ENCODE measurements at regions of chr4 and their contacts with region 1.

Region 1: GRCh38 chr4:78864405-78865024 is 74.7 kb downstream of the PAQR3 start:
- DNase-seq: peak in 3 of 9 experiments; percentile 29 to 78 (median 68)
- ATAC-seq: peak; percentile 73
- H3K4me3 ChIP-seq: no peak overlapping the region
- H3K4me3 Mint-ChIP-seq: no peak overlapping the region
- H3K27ac ChIP-seq: no peak overlapping the region
- H3K27ac Mint-ChIP-seq: no peak overlapping the region
- H3K4me1 ChIP-seq: no peaks in the 10 kb centered on the region
- H3K4me1 Mint-ChIP-seq: peaks cover 2% of the 10 kb centered on the region
- H3K27me3 ChIP-seq: no peaks in the 10 kb centered on the region
- H3K27me3 Mint-ChIP-seq: no peaks in the 10 kb centered on the region
- CTCF ChIP-seq: peak; percentile 94

Region 2: DNA sequence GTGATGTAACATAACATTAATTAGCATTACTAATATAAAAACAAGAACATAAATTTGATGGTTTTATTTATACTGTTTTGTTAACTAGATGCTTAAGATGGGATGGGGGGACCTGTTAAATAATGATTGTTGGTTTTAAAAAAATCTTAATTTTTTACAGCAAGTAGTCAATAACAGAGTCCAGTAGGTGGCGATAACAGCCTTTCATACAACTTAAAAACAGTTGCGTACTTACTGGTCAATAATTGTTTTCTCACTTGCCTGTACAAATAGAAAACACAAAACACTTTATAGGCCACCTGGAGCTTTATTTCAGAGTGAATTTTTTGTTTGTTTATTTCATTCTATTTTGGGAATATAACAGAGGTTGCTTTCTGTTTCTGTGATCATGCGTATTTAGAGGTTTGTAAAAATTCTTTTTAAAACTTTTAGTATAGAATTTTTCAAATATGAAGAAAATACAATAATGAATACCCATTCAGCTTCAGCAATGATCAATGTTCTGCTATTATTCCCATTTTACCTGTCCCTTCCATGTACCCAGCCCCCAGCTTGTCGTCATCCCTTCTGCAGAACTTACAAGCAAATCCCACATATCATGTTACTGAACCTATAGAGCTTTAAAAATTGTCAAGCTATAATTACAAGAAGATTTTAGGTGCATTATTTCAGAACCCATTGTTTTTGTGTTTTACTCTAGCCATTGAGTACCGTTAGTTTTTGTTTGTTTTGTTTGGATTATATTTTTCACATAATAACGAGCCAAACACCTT is 904.8 kb before region 1 on chr4:
- CTCF ChIA-PET with region 1: interaction called, 8 read pairs
- POLR2A ChIA-PET with region 1: no interaction called
- intact Hi-C with region 1: loop called in 1 of 2 experiments (anchors 1 kb)
- DNase-seq: peak in 2 of 9 experiments; percentile 42 to 59
- ATAC-seq: no peak
- H3K4me3 ChIP-seq: no peak overlapping the region
- H3K4me3 Mint-ChIP-seq: no peak overlapping the region
- H3K27ac ChIP-seq: no peak overlapping the region
- H3K27ac Mint-ChIP-seq: no peak overlapping the region
- H3K4me1 ChIP-seq: no peaks in the 10 kb centered on the region
- H3K4me1 Mint-ChIP-seq: peaks cover 5% of the 10 kb centered on the region
- H3K27me3 ChIP-seq: no peaks in the 10 kb centered on the region
- H3K27me3 Mint-ChIP-seq: no peaks in the 10 kb centered on the region
- CTCF ChIP-seq: peak; percentile 87

Region 3: DNA sequence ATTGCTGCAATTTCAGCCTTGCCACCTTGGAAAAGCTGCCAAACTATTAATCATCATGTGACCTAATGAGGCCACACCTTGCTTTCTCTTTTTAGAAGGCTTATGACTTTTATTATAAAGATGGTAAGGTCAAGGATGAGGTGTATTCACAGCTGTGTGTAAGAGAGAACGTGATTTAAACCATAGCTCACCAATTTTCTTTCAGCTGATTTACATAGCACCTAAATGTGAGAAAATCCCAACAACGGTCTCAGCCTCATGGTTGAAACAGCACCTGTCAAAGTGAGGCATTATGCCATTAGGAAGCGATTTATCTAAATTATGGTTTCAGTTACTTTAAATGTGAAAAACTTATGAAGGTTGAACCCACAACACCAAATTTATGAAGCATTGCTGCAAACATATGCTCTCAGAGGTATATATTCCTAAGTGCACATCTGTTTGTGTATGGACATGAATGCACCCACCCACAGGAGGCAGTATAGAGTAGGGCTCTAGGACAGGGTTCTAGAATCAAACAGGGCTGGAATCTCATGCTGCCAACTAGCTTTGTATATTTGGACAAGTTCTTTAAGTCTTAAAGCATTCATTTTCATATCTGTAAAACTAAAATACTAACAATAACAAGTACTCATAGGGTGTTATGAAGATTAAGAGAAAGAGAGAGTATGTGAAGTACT is 272.3 kb before region 1 on chr4:
- CTCF ChIA-PET with region 1: interaction called, 4 read pairs
- POLR2A ChIA-PET with region 1: no interaction called
- intact Hi-C with region 1: loop called in 1 of 2 experiments (anchors 5 kb)
- DNase-seq: peak in 2 of 9 experiments; percentile 9 to 17
- ATAC-seq: no peak
- H3K4me3 ChIP-seq: no peak overlapping the region
- H3K4me3 Mint-ChIP-seq: no peak overlapping the region
- H3K27ac ChIP-seq: no peak overlapping the region
- H3K27ac Mint-ChIP-seq: no peak overlapping the region
- H3K4me1 ChIP-seq: no peaks in the 10 kb centered on the region
- H3K4me1 Mint-ChIP-seq: no peaks in the 10 kb centered on the region
- H3K27me3 ChIP-seq: no peaks in the 10 kb centered on the region
- H3K27me3 Mint-ChIP-seq: no peaks in the 10 kb centered on the region
- CTCF ChIP-seq: no peak

Region 4: GRCh38 chr4:78644744-78645330 is 219.7 kb before region 1 on chr4:
- CTCF ChIA-PET with region 1: interaction called, 8 read pairs
- POLR2A ChIA-PET with region 1: no interaction called
- intact Hi-C with region 1: loop called (anchors 1 to 2 kb)
- DNase-seq: peak in 8 of 9 experiments; percentile 1 to 66 (median 40)
- ATAC-seq: peak; percentile 98
- H3K4me3 ChIP-seq: no peak overlapping the region
- H3K4me3 Mint-ChIP-seq: no peak overlapping the region
- H3K27ac ChIP-seq: no peak overlapping the region
- H3K27ac Mint-ChIP-seq: no peak overlapping the region
- H3K4me1 ChIP-seq: no peaks in the 10 kb centered on the region
- H3K4me1 Mint-ChIP-seq: peaks cover 7% of the 10 kb centered on the region
- H3K27me3 ChIP-seq: no peaks in the 10 kb centered on the region
- H3K27me3 Mint-ChIP-seq: no peaks in the 10 kb centered on the region
- CTCF ChIP-seq: peak; percentile 85

Region 5: DNA sequence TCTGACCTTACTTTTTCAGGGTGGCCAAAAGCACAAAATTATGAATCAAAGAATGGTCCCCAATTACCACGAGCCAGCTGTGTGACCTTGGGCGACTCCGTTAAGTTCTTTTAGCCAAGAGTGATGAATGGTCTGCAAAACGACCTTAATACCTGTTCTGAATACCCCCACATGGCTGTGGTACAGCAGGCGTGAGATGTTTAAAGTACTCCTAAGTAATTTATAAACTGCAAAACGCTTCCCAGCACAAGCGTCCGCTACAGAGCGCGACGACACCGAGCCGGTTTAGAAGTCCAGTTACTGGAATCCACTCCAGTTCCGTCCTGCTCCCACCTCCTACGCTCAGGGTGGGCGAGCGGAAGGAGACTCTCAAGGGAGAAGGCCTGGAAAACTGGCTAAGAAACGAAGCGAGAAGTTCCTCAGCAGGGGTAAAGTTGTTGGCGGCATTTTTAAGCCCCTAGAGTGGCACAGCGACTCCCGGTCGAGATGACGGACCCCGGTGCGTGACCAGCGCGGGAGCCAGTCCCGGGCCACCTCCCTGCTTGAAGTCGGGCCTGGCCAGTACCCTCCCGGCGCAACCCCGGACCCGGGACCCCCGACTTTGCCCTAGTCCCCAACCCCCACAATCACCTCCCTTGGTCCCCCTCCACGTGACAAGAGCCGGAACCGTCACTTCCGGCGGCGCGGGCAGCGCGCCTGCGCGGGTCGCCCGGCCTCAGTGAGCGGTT is 89.0 kb before region 1 on chr4:
- CTCF ChIA-PET with region 1: interaction called, 3 read pairs
- POLR2A ChIA-PET with region 1: no interaction called
- intact Hi-C with region 1: loop called in 1 of 2 experiments (anchors 5 kb)
- DNase-seq: peak; percentile 75 to 93 (median 86)
- ATAC-seq: peak; percentile 57
- H3K4me3 ChIP-seq: peak overlapping the region; percentile 87
- H3K4me3 Mint-ChIP-seq: peak overlapping the region; percentile 92
- H3K27ac ChIP-seq: peak overlapping the region; percentile 82 to 87
- H3K27ac Mint-ChIP-seq: peak overlapping the region; percentile 94
- H3K4me1 ChIP-seq: peaks cover 17% of the 10 kb centered on the region
- H3K4me1 Mint-ChIP-seq: peaks cover 16% of the 10 kb centered on the region
- H3K27me3 ChIP-seq: no peaks in the 10 kb centered on the region
- H3K27me3 Mint-ChIP-seq: no peaks in the 10 kb centered on the region
- CTCF ChIP-seq: no peak

Region 6: GRCh38 chr4:78984593-78984992 is 120.1 kb after region 1 on chr4:
- CTCF ChIA-PET with region 1: no interaction called
- POLR2A ChIA-PET with region 1: no interaction called
- intact Hi-C with region 1: no loop called
- DNase-seq: no peak
- ATAC-seq: no peak
- H3K4me3 ChIP-seq: no peak overlapping the region
- H3K4me3 Mint-ChIP-seq: no peak overlapping the region
- H3K27ac ChIP-seq: no peak overlapping the region
- H3K27ac Mint-ChIP-seq: no peak overlapping the region
- H3K4me1 ChIP-seq: no peaks in the 10 kb centered on the region
- H3K4me1 Mint-ChIP-seq: no peaks in the 10 kb centered on the region
- H3K27me3 ChIP-seq: no peaks in the 10 kb centered on the region
- H3K27me3 Mint-ChIP-seq: peaks cover 7% of the 10 kb centered on the region
- CTCF ChIP-seq: no peak